ENCODE measurements at regions of chr12 and their contacts with region 1.

Region 1: DNA sequence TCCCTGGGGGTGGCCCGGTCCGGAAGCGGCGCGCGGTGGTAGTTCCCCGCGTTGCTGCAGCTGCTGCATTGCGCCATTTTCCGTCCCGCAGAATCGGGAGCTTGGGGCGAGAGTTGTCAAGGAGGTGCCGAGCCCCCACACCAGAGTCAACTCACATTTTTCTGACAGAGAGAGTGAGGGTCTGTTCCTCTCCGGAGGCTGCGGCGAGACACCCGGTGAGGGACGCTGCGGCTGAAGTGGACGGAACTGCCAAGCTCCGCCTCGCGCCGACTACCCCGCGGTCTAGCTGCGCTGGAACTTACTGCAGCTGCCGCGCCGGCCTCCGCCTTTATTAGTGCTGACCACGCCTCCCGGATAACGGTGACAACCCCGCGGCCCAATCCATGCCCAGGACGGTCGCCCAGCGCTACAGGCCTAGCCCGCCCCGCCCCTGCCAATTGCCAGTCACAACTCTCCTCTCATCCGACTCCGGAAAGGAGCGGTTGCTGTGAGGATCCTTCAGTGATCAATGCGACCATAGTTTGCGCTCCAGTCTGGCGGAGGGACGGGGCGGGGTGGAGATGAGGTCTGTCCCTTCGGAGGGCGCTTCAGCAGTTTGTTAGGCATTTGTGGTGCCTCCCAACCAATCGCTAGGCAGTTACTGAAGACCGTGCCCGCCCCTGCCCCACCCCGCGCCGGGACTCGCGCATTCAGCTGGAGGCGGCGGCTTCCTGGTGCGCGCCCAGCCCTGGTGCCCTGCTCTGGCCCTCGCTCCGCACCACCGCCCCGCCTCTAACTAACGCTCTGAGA is at the start of gene VAMP1:
- DNase-seq: peak; percentile 84 to 94 (median 90)
- ATAC-seq: peak; percentile 99
- H3K4me3 ChIP-seq: peak within 1 kb of the TSS; percentile 69
- H3K27ac ChIP-seq: peak within 1 kb of the TSS; percentile 63
- H3K4me1 ChIP-seq: peaks cover 14 to 19% of the 10 kb centered on the region in 2 experiments; a peak in 4 of 5 replicates
- H3K27me3 ChIP-seq: no peaks in the 10 kb centered on the region
- CTCF ChIP-seq: no peak
- EP300 ChIP-seq: no peak
- POLR2A ChIP-seq: peak; percentile 96
- RAD21 ChIP-seq: no peak
- polyA plus RNA-seq, gene VAMP1: 0.76 to 1.1 TPM

Region 2: DNA sequence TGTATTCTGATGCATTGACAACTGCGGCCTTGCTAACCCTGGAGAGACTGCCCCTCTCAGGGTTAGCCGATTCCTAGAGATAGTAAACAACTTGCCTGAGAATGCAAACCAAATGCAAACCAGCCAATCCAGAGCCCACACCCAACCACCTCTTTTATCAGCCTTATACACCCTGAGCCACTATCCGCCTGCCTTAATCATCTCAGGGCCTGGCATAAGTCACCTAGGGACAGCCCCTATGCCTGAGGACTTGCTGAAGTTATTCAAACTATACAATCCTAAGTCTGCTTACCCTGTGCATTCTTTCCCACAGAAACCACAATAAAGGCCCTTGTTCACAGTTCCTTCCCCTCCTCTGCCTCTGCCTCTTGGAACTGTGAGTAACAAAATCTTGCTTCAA is 1249.7 kb before region 1 on chr12:
- CTCF ChIA-PET with region 1: no interaction called
- POLR2A ChIA-PET with region 1: no interaction called
- in situ Hi-C with region 1: no loop called
- intact Hi-C with region 1: no loop called
- DNase-seq: peak in 2 of 4 experiments; percentile 24 to 36
- ATAC-seq: peak; percentile 75
- H3K4me3 ChIP-seq: no peak overlapping the region
- H3K27ac ChIP-seq: no peak overlapping the region
- H3K4me1 ChIP-seq: peaks cover 0 to 11% of the 10 kb centered on the region in 2 experiments; a peak in 4 of 5 replicates
- H3K27me3 ChIP-seq: no peaks in the 10 kb centered on the region
- CTCF ChIP-seq: no peak
- EP300 ChIP-seq: peak; percentile 64; the same call in 1 of the 2 replicates
- POLR2A ChIP-seq: no peak
- RAD21 ChIP-seq: no peak

Region 3: GRCh38 chr12:6062757-6063735 is 407.5 kb before region 1 on chr12:
- CTCF ChIA-PET with region 1: no interaction called
- POLR2A ChIA-PET with region 1: no interaction called
- in situ Hi-C with region 1: loop called (anchors 25 kb)
- intact Hi-C with region 1: no loop called
- DNase-seq: peak; percentile 43 to 71 (median 71)
- ATAC-seq: peak; percentile 93
- H3K4me3 ChIP-seq: no peak overlapping the region
- H3K27ac ChIP-seq: no peak overlapping the region
- H3K4me1 ChIP-seq: no peaks in the 10 kb centered on the region
- H3K27me3 ChIP-seq: peaks cover 4 to 30% of the 10 kb centered on the region in 2 experiments; a peak in 3 of 5 replicates
- CTCF ChIP-seq: peak; percentile 79 to 85 (median 82)
- EP300 ChIP-seq: no peak
- POLR2A ChIP-seq: no peak
- RAD21 ChIP-seq: peak; percentile 69 to 88

Region 4: GRCh38 chr12:6323340-6323994 is 147.1 kb before region 1 on chr12:
- CTCF ChIA-PET with region 1: interaction called, 9 read pairs
- POLR2A ChIA-PET with region 1: interaction called, 9 read pairs
- in situ Hi-C with region 1: no loop called
- intact Hi-C with region 1: loop called (anchors 1 kb)
- DNase-seq: peak; percentile 63 to 77 (median 70)
- ATAC-seq: peak; percentile 84
- H3K4me3 ChIP-seq: no peak overlapping the region
- H3K27ac ChIP-seq: peak overlapping the region; percentile 69; the same call in 2 of the 3 replicates
- H3K4me1 ChIP-seq: peaks cover 16 to 21% of the 10 kb centered on the region in 2 experiments; a peak in 4 of 5 replicates
- H3K27me3 ChIP-seq: peaks cover 0 to 6% of the 10 kb centered on the region in 2 experiments; a peak in 4 of 5 replicates
- CTCF ChIP-seq: peak; percentile 67 to 93 (median 90)
- EP300 ChIP-seq: peak; percentile 40; the same call in 1 of the 2 replicates
- POLR2A ChIP-seq: no peak
- RAD21 ChIP-seq: peak; percentile 48 to 72

Region 5: DNA sequence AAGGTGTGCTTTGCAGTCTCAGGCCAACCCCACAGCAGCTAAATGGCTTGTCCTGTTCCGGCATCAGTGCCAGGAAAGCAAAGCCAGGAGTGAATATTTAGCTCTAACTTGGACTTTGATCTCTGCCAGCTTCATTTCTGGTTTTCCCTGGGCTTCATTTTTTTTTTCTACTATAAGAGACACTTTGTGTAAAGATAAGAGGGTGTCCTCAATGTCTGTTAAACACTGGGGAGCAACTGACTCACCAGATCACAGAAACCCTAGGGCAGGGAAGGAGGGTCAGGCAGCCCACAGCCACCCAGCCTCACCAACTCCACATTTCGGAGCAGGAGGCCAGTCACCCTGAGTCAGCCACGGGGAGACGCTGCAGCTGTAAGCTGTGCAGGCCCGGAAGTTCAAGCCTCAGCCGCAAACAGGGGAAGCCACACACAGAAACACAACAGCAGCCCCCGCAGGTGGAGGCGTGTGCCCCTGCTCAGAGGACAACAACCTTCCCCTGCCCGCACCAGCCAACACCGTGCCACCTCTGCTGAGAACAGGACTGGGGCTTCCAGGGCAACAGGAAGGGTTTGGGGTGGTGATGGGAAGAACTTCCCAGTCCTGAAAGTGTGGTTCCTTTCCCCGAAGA is 135.0 kb before region 1 on chr12:
- CTCF ChIA-PET with region 1: interaction called, 9 read pairs
- POLR2A ChIA-PET with region 1: interaction called, 6 read pairs
- in situ Hi-C with region 1: no loop called
- intact Hi-C with region 1: loop called (anchors 5 kb)
- DNase-seq: peak; percentile 54 to 85 (median 65)
- ATAC-seq: peak; percentile 79
- H3K4me3 ChIP-seq: peak overlapping the region; percentile 39; the same call in 1 of the 2 replicates
- H3K27ac ChIP-seq: peak overlapping the region; percentile 98
- H3K4me1 ChIP-seq: peaks cover 27 to 48% of the 10 kb centered on the region in 2 experiments
- H3K27me3 ChIP-seq: no peaks in the 10 kb centered on the region
- CTCF ChIP-seq: peak; percentile 70 to 86 (median 74)
- EP300 ChIP-seq: no peak
- POLR2A ChIP-seq: no peak
- RAD21 ChIP-seq: peak; percentile 65 to 83

Region 6: GRCh38 chr12:6423267-6424007 is 47.1 kb before region 1 on chr12:
- CTCF ChIA-PET with region 1: interaction called, 19 read pairs
- POLR2A ChIA-PET with region 1: interaction called, 10 read pairs
- in situ Hi-C with region 1: no loop called
- intact Hi-C with region 1: loop called (anchors 1 kb)
- DNase-seq: peak; percentile 73 to 89 (median 75)
- ATAC-seq: peak; percentile 99
- H3K4me3 ChIP-seq: no peak overlapping the region
- H3K27ac ChIP-seq: no peak overlapping the region
- H3K4me1 ChIP-seq: peaks cover 2 to 5% of the 10 kb centered on the region in 2 experiments; a peak in 4 of 5 replicates
- H3K27me3 ChIP-seq: no peaks in the 10 kb centered on the region
- CTCF ChIP-seq: peak; percentile 82 to 84 (median 82)
- EP300 ChIP-seq: no peak
- POLR2A ChIP-seq: no peak
- RAD21 ChIP-seq: peak; percentile 90 to 92

Region 7: DNA sequence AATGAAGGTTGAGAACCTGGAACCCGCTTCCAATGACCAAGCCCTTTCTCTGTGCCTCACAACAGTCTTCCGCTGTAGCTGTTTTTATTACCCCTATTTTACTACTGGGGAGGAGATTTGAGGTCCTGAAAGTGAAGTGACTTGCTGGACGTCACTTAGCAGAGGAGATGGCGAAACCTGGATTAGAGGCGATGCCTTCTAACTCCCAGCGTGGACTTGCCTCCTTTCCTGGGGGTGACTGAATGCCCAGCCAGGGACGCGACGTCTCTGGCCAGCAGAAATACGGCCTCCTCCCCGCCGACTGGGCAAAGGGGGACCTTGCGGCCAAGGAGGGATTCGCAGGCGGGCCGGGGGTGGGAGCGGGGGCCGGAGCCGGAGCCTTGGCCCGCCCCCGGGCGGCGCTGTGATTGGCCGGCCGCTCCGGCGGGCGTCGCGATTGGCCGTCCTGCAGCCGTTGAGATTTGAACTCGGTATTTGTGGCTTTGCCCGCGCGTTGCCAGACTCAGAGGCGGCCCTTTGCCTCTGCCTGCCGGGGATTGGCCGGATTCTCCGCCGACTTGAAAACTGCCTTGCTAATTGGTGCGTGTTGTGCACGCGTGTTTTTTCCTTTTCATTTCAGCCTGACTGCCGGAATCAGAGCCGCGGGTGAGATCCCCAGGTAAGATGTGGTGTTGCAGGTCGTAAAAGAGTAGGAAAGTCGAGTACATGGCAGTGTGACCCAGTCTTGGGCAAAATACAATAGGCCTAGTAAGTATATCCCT is 23.1 kb after region 1 on chr12 and contains the start of gene NCAPD2:
- CTCF ChIA-PET with region 1: interaction called, 4 read pairs
- POLR2A ChIA-PET with region 1: interaction called, 12 read pairs
- in situ Hi-C with region 1: no loop called
- intact Hi-C with region 1: no loop called
- DNase-seq: peak; percentile 95 to 97 (median 96)
- ATAC-seq: peak; percentile 94
- H3K4me3 ChIP-seq: peak within 1 kb of the TSS; percentile 50
- H3K27ac ChIP-seq: peak within 1 kb of the TSS; percentile 86
- H3K4me1 ChIP-seq: peaks cover 0 to 15% of the 10 kb centered on the region in 2 experiments; a peak in 3 of 5 replicates
- H3K27me3 ChIP-seq: no peaks in the 10 kb centered on the region
- CTCF ChIP-seq: no peak; a peak in 1 of 6 replicates
- EP300 ChIP-seq: no peak
- POLR2A ChIP-seq: peak; percentile 83
- RAD21 ChIP-seq: no peak
- polyA plus RNA-seq, gene NCAPD2: 16.9 to 35.5 TPM

Region 8: GRCh38 chr12:6554168-6555017 is 83.8 kb after region 1 on chr12:
- CTCF ChIA-PET with region 1: no interaction called
- POLR2A ChIA-PET with region 1: no interaction called
- in situ Hi-C with region 1: no loop called
- intact Hi-C with region 1: no loop called
- DNase-seq: peak; percentile 63 to 81 (median 73)
- ATAC-seq: peak; percentile 96
- H3K4me3 ChIP-seq: no peak overlapping the region
- H3K27ac ChIP-seq: no peak overlapping the region
- H3K4me1 ChIP-seq: peaks cover 2 to 36% of the 10 kb centered on the region in 2 experiments; a peak in 4 of 5 replicates
- H3K27me3 ChIP-seq: no peaks in the 10 kb centered on the region
- CTCF ChIP-seq: peak; percentile 66 to 77 (median 69)
- EP300 ChIP-seq: no peak
- POLR2A ChIP-seq: no peak
- RAD21 ChIP-seq: peak in 1 of 2 experiments; percentile 61; a peak in 2 of 4 replicates

Region 9: DNA sequence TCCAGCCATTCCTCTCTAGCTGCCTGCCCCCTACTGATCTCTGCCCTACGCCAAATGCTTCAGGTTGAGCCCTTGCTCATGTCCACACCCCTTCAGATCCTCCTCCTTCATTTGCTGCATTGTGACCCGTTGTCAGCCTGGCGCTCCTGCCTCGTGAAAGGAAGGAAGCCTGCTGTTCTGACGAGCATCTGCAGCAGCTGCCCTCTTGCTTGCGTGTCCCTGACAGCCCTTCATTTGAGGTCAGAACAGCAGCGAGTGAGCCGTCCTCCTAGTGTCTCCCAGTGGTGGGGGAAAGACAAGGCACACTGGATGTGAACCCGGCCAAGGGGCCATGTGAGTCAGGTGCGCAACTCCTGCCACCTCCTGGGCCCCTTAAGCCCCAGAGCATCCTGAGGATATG is 233.1 kb after region 1 on chr12:
- CTCF ChIA-PET with region 1: no interaction called
- POLR2A ChIA-PET with region 1: no interaction called
- in situ Hi-C with region 1: no loop called
- intact Hi-C with region 1: no loop called
- DNase-seq: peak; percentile 19 to 44 (median 26)
- ATAC-seq: peak; percentile 80
- H3K4me3 ChIP-seq: no peak overlapping the region
- H3K27ac ChIP-seq: no peak overlapping the region
- H3K4me1 ChIP-seq: peaks cover 5 to 21% of the 10 kb centered on the region in 2 experiments; a peak in 4 of 5 replicates
- H3K27me3 ChIP-seq: peaks cover 11 to 27% of the 10 kb centered on the region in 2 experiments; a peak in 4 of 5 replicates
- CTCF ChIP-seq: peak in 2 of 3 experiments; percentile 14 to 41; a peak in 3 of 6 replicates
- EP300 ChIP-seq: no peak
- POLR2A ChIP-seq: no peak
- RAD21 ChIP-seq: no peak